Left colon (tissue), 2 donors: ENCODE measurements at regions of chr3 and their contacts with region 1.

Region 1: DNA sequence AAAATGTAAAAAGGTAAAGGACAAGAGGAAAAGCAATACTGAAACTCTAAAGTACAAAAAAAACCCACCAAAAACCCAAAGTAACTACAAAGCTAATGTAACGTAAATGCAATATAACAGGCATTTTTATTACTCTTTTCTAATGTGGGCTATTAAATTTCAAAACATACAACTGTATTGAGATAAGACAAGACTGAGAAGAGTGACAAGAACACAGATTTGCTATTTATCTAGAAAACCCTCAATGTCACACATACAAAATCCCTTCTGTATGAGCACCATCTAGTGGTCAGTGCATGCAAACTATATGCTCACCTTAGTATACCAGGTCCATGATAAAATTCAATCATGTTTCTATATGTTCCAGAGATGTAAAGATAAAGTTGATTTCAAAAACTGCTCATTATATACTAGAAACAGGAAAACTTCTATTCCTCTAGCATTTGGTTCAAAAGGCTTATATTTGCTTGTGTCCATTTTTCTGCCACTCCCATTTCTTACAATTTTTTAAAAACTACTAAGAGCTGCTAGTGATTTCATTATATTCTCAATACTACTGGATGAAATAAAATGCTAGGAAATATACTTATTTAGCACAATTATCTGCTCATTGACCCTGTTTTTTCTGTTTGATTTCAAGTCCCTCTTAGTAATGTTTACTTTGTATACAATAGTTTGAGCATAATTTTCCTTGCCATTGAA is 111.4 kb downstream of the DLG1 start:
- DNase-seq: no peak
- ATAC-seq: peak; percentile 88

Region 2: DNA sequence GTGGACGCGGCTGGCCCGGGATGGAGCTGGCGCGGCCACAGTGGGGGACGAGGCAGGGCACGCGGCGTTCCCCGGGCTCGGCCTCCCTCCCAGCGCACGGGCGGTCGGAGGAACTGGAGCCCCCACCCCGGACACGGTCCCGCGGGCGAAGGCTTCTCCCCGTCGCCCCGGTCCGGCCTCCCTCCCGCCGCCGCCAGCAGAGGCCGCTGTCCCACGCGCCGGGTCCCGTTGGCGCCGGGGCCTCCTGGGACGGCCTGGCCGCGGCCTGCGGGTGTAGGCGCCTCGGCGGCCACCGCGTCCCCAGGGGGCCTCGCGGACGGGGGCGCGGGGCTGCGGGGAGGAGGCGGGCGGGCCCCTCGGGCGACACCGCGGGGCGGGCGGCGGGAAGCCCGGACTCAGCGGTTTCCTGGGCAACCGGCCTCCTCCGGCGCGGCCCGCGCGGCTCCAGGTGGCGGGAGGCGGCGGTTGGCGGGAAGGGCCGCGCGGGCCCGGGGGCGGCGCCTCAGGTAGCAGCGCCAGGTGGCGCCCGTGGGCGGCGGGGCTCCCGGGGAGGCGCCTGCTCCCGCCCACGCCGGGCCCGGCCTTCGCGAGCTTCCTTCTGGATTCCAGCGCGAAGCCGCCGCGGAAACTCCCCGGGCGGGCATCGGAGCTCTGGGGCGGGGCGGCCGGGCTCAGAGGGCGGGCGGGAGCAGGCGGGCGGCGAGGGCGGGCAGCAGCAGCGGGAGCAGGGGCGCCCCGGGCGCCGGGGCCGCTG is 184.2 kb before region 1 on chr3:
- intact Hi-C with region 1: loop called in 1 of 2 experiments (anchors 10 kb)
- DNase-seq: peak; percentile 85 to 93
- ATAC-seq: peak; percentile 88

Region 3: GRCh38 chr3:197103766-197104165 is 83.3 kb before region 1 on chr3:
- intact Hi-C with region 1: no loop called
- DNase-seq: no peak
- ATAC-seq: no peak